Right cardiac atrium (tissue), 5 donors: ENCODE measurements at regions of chrX and their contacts with region 1.

Region 1: GRCh38 chrX:149286940-149287349 is 218.2 kb downstream of the IDS start:
- DNase-seq: peak in 1 of 3 donors; percentile 35
- ATAC-seq: no peak
- H3K4me3 ChIP-seq: no peak overlapping the region
- H3K27ac ChIP-seq: no peak overlapping the region
- H3K4me1 ChIP-seq: no peaks in the 10 kb centered on the region
- H3K27me3 ChIP-seq: no peaks in the 10 kb centered on the region

Region 2: DNA sequence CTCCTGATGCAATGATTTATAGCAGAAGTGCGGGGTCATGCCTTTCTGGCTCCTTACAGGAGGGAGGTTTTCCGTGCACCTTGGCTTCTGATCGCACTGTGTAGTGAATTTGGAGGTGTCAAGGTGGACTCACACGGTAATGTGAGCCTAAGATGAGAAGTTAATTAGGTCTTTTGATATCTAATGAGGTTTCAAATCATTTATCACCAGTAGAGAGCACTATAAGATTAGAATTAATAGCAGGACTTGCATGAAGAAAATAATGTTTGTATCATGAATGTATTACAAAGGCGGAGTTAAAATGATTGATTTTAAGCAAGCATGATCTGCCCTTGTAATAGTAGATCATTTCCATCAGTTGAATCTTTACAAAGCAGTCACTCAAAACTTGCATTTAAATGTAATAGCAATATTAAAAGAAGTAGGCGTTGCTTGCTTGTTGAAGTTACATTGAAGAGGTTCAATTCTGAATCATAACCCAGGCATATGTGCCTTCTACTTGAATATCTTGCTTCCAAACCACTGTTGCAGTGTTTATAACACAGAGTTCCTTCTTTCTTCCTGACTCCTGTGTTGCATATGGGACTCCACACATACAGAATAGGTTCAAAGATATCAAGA is 1153.7 kb before region 1 on chrX:
- intact Hi-C with region 1: loop called in 2 of 4 experiments (anchors 5 to 10 kb)
- DNase-seq: no peak
- ATAC-seq: no peak
- H3K4me3 ChIP-seq: no peak overlapping the region
- H3K27ac ChIP-seq: no peak overlapping the region
- H3K4me1 ChIP-seq: no peaks in the 10 kb centered on the region
- H3K27me3 ChIP-seq: no peaks in the 10 kb centered on the region

Region 3: DNA sequence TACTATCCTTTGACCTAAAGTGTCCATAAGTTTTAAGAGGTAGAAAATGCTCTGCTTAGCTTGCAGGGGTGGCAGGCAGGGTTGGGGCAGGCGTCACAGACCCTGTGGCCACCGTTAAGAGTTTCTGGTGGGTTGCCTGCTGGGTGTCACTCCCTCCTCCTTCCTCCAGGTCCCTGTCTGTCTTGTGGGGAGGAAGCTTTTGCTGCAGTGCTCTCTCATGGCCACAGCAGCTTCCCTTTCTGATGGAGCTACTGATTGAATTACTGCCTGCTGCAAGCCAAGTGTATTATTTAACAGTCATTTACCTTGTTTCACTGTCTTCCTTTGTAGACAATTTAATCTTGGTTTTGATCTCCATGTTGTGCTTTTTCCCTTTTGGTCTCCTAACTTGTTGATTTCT is 166.5 kb before region 1 on chrX:
- intact Hi-C with region 1: no loop called
- DNase-seq: no peak
- ATAC-seq: no peak
- H3K4me3 ChIP-seq: no peak overlapping the region
- H3K27ac ChIP-seq: no peak overlapping the region
- H3K4me1 ChIP-seq: no peaks in the 10 kb centered on the region
- H3K27me3 ChIP-seq: no peaks in the 10 kb centered on the region

Region 4: GRCh38 chrX:149145845-149146285 is 141.1 kb before region 1 on chrX:
- intact Hi-C with region 1: no loop called
- DNase-seq: no peak
- ATAC-seq: no peak
- H3K4me3 ChIP-seq: no peak overlapping the region
- H3K27ac ChIP-seq: no peak overlapping the region
- H3K4me1 ChIP-seq: no peaks in the 10 kb centered on the region
- H3K27me3 ChIP-seq: no peaks in the 10 kb centered on the region